Activated T-helper 1 cell treated with anti-CD3 and anti-CD28 coated beads, Interleukin-12 subunit alpha, Interleukin-12 subunit beta, Interleukin-2, Interleukin-4 antibody, amounts not matched to agents 30 ng/mL and 10 ng/mL and 1 ng/mL, durations not matched to agents 14 hours and 24 hours and 36 hours (primary cell): ENCODE measurements at regions of chr2 and their contacts with region 1.

Region 1: GRCh38 chr2:28452534-28453081 is 43.3 kb upstream of the PLB1 start:
- DNase-seq: peak; percentile 67
- H3K4me3 Mint-ChIP-seq: no peak overlapping the region
- H3K27ac Mint-ChIP-seq: no peak overlapping the region
- H3K4me1 Mint-ChIP-seq: peaks cover 40% of the 10 kb centered on the region
- H3K27me3 Mint-ChIP-seq: peaks cover 4% of the 10 kb centered on the region

Region 2: GRCh38 chr2:27703638-27704341 is 748.8 kb before region 1 on chr2:
- intact Hi-C with region 1: loop called (anchors 1 kb)
- DNase-seq: peak; percentile 74
- H3K4me3 Mint-ChIP-seq: no peak overlapping the region
- H3K27ac Mint-ChIP-seq: no peak overlapping the region
- H3K4me1 Mint-ChIP-seq: peaks cover 15% of the 10 kb centered on the region
- H3K27me3 Mint-ChIP-seq: no peaks in the 10 kb centered on the region

Region 3: GRCh38 chr2:27771548-27772335 is 680.9 kb before region 1 on chr2 and contains the start of gene MRPL33:
- intact Hi-C with region 1: loop called (anchors 1 kb)
- DNase-seq: peak; percentile 86
- H3K4me3 Mint-ChIP-seq: peak within 1 kb of the TSS; percentile 99
- H3K27ac Mint-ChIP-seq: peak within 1 kb of the TSS; percentile 96
- H3K4me1 Mint-ChIP-seq: peaks cover 47% of the 10 kb centered on the region
- H3K27me3 Mint-ChIP-seq: no peaks in the 10 kb centered on the region
- total RNA-seq, gene MRPL33: 55.4 and 55.9 TPM in 2 replicates

Region 4: DNA sequence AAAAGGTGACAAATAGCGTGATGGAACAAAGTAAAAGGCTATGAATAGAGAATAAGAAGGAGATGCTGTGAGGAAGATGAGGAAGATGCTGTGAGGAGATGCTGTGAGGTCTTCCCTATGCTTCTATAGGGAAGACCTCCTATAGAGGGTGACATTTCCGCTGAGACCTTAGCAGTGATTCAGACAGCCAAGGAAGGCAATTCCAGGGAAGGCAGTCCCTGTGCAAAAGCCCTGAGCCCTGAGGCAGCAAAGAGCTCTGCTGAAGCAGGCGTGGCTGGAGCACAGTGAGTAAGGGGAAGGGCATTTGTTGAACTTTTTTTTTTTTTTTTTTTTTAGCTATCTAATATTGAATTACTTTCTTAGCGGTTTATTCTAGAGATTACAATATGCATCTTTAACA is 202.6 kb before region 1 on chr2:
- intact Hi-C with region 1: loop called (anchors 1 kb)
- DNase-seq: no peak
- H3K4me3 Mint-ChIP-seq: no peak overlapping the region
- H3K27ac Mint-ChIP-seq: no peak overlapping the region
- H3K4me1 Mint-ChIP-seq: peaks cover 64% of the 10 kb centered on the region
- H3K27me3 Mint-ChIP-seq: no peaks in the 10 kb centered on the region

Region 5: DNA sequence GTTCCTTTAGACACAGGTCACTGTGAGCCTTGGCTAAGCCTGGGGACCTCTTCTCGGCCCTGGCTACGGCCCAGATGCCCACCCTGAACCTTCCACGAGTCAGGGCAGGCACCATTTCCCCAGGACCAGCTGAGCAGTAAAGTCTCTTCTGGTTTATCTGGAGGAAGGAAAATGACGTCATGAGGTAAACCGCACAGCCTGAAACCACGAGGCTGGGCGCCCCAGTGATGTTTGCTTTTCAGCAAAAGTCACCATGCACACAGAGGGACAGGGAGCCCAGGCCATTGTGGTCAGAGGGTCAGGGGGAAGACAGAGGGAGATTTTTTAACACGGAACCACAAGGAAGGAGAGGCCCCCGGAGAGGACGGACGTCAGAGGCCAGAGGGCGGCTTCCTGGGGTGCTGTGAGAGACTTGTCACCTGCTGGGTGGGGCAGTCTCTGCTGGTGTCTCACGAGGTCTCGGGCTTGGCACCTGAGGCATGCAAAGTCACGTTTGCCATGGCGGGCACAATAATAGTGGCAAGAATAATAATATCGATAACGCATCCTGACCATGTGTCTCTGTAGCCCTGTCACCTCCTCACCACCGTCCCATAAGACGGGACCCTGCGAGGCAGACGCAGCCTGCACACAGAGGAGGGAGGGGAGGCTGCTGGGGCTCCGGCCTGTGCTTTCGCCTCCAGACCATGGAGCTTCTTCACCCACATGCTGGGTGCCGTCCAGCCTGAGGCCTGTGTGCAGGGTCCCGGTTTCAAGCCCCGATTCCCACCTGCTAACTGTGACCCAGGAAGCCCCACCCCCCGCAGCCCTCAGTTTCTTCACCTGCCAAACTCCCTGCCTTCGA is 93.2 kb before region 1 on chr2:
- intact Hi-C with region 1: loop called (anchors 1 kb)
- DNase-seq: peak; percentile 84
- H3K4me3 Mint-ChIP-seq: peak overlapping the region; percentile 61
- H3K27ac Mint-ChIP-seq: peak overlapping the region; percentile 96
- H3K4me1 Mint-ChIP-seq: peaks cover 44% of the 10 kb centered on the region
- H3K27me3 Mint-ChIP-seq: peaks cover 10% of the 10 kb centered on the region